ENCODE measurements at regions of chr14 and their contacts with region 1.

Region 1: DNA sequence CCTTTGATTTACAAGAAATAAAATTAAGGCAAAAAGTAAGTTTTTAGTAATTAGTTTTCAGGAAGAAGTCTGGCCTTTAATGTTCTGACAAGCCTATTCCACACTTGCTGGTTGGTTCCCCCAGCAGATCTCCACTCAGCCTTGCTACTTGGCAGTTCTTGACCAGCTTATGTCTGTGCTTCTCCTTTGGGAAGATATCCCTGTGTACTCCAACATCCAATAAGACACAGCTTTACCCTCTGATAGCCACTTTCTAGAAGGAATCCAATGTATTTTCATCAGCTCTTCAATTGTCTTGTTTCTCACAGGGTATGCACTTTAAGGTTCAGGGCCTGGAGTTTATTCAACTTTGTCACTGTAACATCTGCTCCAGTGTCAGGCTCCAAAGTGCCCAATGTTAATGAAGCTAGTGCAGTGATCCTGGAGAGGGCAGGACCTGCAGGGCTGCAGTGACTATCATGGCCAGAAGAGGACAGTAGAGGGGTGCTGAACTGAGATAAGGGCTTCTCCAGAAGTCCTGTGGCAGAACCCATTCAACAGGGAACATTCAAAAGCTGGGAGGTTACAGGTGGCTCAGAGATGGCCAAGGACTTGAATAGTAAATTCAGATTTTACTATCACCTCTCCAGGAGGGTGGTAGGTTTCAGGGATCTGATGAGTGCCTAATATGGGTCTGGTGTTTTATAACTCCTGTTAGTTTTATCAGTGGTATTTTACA is 22.9 kb downstream of the JKAMP start:
- DNase-seq: no peak
- H3K4me3 ChIP-seq: no peak overlapping the region
- H3K27me3 ChIP-seq: no peaks in the 10 kb centered on the region
- CTCF ChIP-seq: peak; percentile 92

Region 2: GRCh38 chr14:59492384-59492783 is 14.8 kb before region 1 on chr14:
- CTCF ChIA-PET with region 1: interaction called, 11 read pairs
- POLR2A ChIA-PET with region 1: no interaction called
- DNase-seq: no peak
- H3K4me3 ChIP-seq: no peak overlapping the region
- H3K27me3 ChIP-seq: no peaks in the 10 kb centered on the region
- CTCF ChIP-seq: no peak

Region 3: DNA sequence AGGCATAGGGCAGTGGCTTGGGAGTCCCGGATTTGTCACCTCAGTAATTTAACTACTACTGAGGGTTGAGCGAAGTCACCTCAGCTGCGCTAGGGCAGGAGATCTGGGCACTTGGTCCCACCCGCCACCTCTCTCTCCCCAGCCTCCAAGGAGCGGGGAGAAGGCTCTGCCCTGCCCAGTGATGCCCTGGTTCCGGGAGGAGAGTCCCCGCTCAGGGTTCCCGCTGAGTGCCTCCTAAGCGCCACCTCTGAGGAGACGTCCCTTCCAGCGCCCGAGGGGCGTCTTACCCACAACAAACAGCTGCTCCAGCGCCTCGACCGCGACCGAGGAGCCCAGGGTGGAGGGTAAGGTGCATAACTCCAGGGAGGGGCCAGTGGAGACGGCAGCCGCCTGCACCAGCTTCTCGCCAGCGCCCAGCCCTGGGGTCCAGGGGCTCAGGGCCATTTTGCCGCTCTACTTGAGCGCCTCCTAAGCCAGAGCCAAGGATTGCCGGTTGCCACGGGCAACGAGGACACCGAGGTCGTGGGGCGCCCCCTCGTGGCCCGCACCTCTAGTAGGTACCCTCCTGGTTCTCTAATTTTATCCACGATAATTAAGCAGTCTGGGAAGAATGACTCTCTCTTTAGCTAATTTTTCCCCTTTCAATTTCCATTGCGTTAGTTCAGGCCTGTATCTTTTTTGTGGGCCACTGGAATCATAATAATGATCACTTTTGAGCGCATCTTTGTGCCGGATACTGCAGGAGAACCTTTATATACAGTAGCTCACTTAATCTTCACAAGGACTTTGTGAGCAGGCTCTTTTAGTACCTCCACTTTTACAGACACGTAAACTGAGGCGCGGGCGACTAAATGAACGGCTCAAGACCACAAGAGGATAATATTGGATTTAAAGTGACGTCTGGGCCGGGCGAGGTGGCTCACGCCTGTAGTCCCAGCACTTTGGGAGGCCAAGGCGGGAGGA is 69.4 kb after region 1 on chr14 and contains the start of gene CCDC175:
- CTCF ChIA-PET with region 1: interaction called, 10 read pairs
- POLR2A ChIA-PET with region 1: no interaction called
- DNase-seq: no peak
- H3K4me3 ChIP-seq: peak within 1 kb of the TSS; percentile 18
- H3K27me3 ChIP-seq: peaks cover 2% of the 10 kb centered on the region; the same call in 1 of the 2 replicates
- CTCF ChIP-seq: peak; percentile 74
- polyA plus RNA-seq, gene CCDC175: not detected in 2 replicates

Region 4: DNA sequence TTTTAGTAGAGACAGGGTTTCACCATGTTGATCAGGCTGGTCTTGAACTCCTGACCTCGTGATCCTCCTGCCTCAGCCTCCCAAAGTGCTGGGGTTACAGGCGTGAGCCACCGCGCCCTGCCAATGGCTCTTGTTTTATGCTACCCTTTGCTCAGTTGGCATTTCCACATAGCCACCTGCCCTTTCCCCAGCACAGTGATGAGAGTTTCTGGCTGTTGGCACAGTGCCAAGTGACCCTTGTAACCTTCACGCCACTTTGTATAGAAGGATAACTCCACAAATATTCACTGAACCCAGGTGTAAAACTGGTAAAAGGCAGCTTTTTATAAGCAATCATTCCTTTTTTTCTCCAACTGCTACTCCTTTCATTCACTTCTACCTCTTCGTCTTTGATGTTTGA is 87.8 kb after region 1 on chr14:
- CTCF ChIA-PET with region 1: no interaction called
- POLR2A ChIA-PET with region 1: no interaction called
- DNase-seq: no peak
- H3K4me3 ChIP-seq: no peak overlapping the region
- H3K27me3 ChIP-seq: no peaks in the 10 kb centered on the region
- CTCF ChIP-seq: no peak

Measured in BJ (cell line).